CD8-positive, alpha-beta T cell (primary cell): ENCODE measurements at regions of chr2 and their contacts with region 1.

Region 1: DNA sequence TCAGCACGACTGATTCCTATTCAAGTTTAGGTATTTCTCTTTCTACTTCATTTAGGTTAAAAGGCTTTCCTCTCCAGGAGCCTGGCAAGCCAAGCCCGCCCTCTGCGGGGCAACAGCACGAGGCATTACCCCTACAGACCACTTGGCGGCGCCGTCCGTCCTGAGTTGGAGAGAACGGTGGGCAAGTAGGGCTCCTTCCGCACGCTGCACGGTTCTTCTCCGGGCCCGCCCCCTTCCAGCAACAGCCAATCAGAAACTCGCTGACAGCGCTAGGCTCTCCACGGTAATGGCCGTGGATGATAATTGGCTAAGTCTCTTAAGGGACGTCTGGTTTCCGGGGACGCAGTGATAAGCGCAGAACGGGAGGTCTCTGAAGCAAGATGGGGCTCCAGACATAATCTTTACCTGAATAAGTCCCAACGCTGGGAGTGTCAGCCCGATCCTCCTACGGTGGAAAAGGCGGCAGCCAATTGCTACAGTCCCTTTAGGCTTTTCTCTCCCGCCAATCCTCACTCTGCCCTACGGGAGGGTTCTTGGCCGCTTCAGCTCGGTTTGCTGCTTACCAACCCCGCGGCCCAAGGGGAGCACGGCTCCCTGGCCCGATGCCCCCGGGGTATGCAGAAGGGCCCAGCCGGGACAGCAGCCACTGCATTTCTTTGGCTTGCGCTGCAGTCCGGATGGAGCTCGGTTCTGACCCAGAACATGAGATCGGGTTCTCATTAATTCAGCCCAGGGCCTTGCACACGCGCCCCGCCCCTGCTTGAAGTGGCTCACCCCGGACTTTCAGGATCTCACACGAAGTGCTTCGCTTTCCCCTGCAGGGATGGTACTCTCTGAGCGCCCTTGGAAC is 206.9 kb upstream of the PKDCC start:
- DNase-seq: peak; percentile 94 to 98 (median 97)
- ATAC-seq: peak; percentile 97
- H3K4me3 ChIP-seq: peak overlapping the region; percentile 74 to 81
- H3K4me3 Mint-ChIP-seq: peak overlapping the region; percentile 95
- H3K27ac ChIP-seq: peak overlapping the region; percentile 77 to 82
- H3K27ac Mint-ChIP-seq: peak overlapping the region; percentile 96
- H3K4me1 ChIP-seq: peaks cover 11% of the 10 kb centered on the region
- H3K4me1 Mint-ChIP-seq: peaks cover 14% of the 10 kb centered on the region
- H3K27me3 ChIP-seq: peaks cover 0 to 1% of the 10 kb centered on the region in 2 experiments
- H3K27me3 Mint-ChIP-seq: peaks cover 17% of the 10 kb centered on the region
- CTCF ChIP-seq: peak; percentile 95

Region 2: DNA sequence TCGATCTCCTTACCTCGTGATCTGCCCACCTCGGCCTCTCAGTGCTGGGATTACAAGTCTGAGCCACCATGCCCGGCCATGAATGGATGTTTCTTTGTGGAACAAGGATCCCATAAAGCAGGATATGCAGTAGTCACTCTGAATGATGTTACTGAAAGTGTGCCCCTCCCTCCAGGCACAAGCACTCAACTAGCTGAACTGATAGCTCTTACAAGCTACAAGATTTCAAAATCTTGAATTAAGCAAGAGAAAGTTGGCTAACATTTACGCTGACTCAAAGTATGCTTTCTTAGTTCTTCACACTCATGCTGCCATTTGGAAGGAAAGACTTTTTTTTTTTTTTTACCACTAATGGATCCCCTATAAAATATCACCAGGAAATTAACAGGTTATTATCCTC is 342.2 kb before region 1 on chr2:
- CTCF ChIA-PET with region 1: no interaction called
- POLR2A ChIA-PET with region 1: no interaction called
- intact Hi-C with region 1: no loop called
- DNase-seq: no peak
- ATAC-seq: no peak
- H3K4me3 ChIP-seq: no peak overlapping the region
- H3K4me3 Mint-ChIP-seq: no peak overlapping the region
- H3K27ac ChIP-seq: no peak overlapping the region
- H3K27ac Mint-ChIP-seq: no peak overlapping the region
- H3K4me1 ChIP-seq: no peaks in the 10 kb centered on the region
- H3K4me1 Mint-ChIP-seq: no peaks in the 10 kb centered on the region
- H3K27me3 ChIP-seq: no peaks in the 10 kb centered on the region
- H3K27me3 Mint-ChIP-seq: peaks cover 2% of the 10 kb centered on the region
- CTCF ChIP-seq: no peak

Region 3: GRCh38 chr2:41853427-41854216 is 12.7 kb after region 1 on chr2:
- CTCF ChIA-PET with region 1: interaction called, 17 read pairs
- POLR2A ChIA-PET with region 1: interaction called, 6 read pairs
- intact Hi-C with region 1: no loop called
- DNase-seq: peak in 3 of 9 experiments; percentile 15 to 40 (median 29)
- ATAC-seq: no peak
- H3K4me3 ChIP-seq: no peak overlapping the region
- H3K4me3 Mint-ChIP-seq: no peak overlapping the region
- H3K27ac ChIP-seq: no peak overlapping the region
- H3K27ac Mint-ChIP-seq: no peak overlapping the region
- H3K4me1 ChIP-seq: no peaks in the 10 kb centered on the region
- H3K4me1 Mint-ChIP-seq: no peaks in the 10 kb centered on the region
- H3K27me3 ChIP-seq: peaks cover 0 to 4% of the 10 kb centered on the region in 2 experiments
- H3K27me3 Mint-ChIP-seq: peaks cover 24% of the 10 kb centered on the region
- CTCF ChIP-seq: peak; percentile 31

Region 4: GRCh38 chr2:42086500-42086953 is 245.6 kb after region 1 on chr2:
- CTCF ChIA-PET with region 1: interaction called, 34 read pairs
- POLR2A ChIA-PET with region 1: interaction called, 3 read pairs
- intact Hi-C with region 1: loop called (anchors 1 kb)
- DNase-seq: peak in 4 of 9 experiments; percentile 27 to 74 (median 48)
- ATAC-seq: peak; percentile 78
- H3K4me3 ChIP-seq: no peak overlapping the region
- H3K4me3 Mint-ChIP-seq: no peak overlapping the region
- H3K27ac ChIP-seq: no peak overlapping the region
- H3K27ac Mint-ChIP-seq: no peak overlapping the region
- H3K4me1 ChIP-seq: no peaks in the 10 kb centered on the region
- H3K4me1 Mint-ChIP-seq: peaks cover 8% of the 10 kb centered on the region
- H3K27me3 ChIP-seq: no peaks in the 10 kb centered on the region
- H3K27me3 Mint-ChIP-seq: peaks cover 3% of the 10 kb centered on the region
- CTCF ChIP-seq: peak; percentile 62

Region 5: GRCh38 chr2:42328148-42328833 is 487.4 kb after region 1 on chr2:
- CTCF ChIA-PET with region 1: no interaction called
- POLR2A ChIA-PET with region 1: no interaction called
- intact Hi-C with region 1: loop called in 1 of 2 experiments (anchors 2 kb)
- DNase-seq: peak in 2 of 9 experiments; percentile 36 to 50
- ATAC-seq: peak; percentile 45
- H3K4me3 ChIP-seq: no peak overlapping the region
- H3K4me3 Mint-ChIP-seq: no peak overlapping the region
- H3K27ac ChIP-seq: no peak overlapping the region
- H3K27ac Mint-ChIP-seq: peak overlapping the region; percentile 43
- H3K4me1 ChIP-seq: no peaks in the 10 kb centered on the region
- H3K4me1 Mint-ChIP-seq: peaks cover 7% of the 10 kb centered on the region
- H3K27me3 ChIP-seq: no peaks in the 10 kb centered on the region
- H3K27me3 Mint-ChIP-seq: no peaks in the 10 kb centered on the region
- CTCF ChIP-seq: peak; percentile 55

Region 6: GRCh38 chr2:42494355-42495233 is 653.7 kb after region 1 on chr2:
- CTCF ChIA-PET with region 1: no interaction called
- POLR2A ChIA-PET with region 1: no interaction called
- intact Hi-C with region 1: loop called in 1 of 2 experiments (anchors 2 kb)
- DNase-seq: peak; percentile 51 to 84 (median 75)
- ATAC-seq: peak; percentile 43
- H3K4me3 ChIP-seq: peak overlapping the region; percentile 58 to 74
- H3K4me3 Mint-ChIP-seq: peak overlapping the region; percentile 93
- H3K27ac ChIP-seq: peak overlapping the region in 1 of 2 experiments; percentile 15
- H3K27ac Mint-ChIP-seq: peak overlapping the region; percentile 89
- H3K4me1 ChIP-seq: no peaks in the 10 kb centered on the region
- H3K4me1 Mint-ChIP-seq: peaks cover 32% of the 10 kb centered on the region
- H3K27me3 ChIP-seq: peaks cover 0 to 4% of the 10 kb centered on the region in 2 experiments
- H3K27me3 Mint-ChIP-seq: peaks cover 9% of the 10 kb centered on the region
- CTCF ChIP-seq: peak; percentile 92